Heart right ventricle (tissue), 16 donors: ENCODE measurements at regions of chr2 and their contacts with region 1.

Region 1: GRCh38 chr2:33051586-33052360 is 105.0 kb downstream of the LTBP1 start:
- DNase-seq: no peak
- ATAC-seq: peak in 4 of 8 donors; percentile 34 to 93 (median 55)
- H3K4me3 ChIP-seq: no peak overlapping the region
- H3K27ac ChIP-seq: peak overlapping the region in 1 of 10 donors; percentile 38
- H3K4me1 ChIP-seq: peaks cover 0 to 17% (median 3%) of the 10 kb centered on the region in 9 donors
- H3K27me3 ChIP-seq: no peaks in the 10 kb centered on the region
- CTCF ChIP-seq: no peak

Region 2: GRCh38 chr2:32783469-32783868 is 268.3 kb before region 1 on chr2:
- intact Hi-C with region 1: no loop called
- DNase-seq: peak in 1 of 2 donors; percentile 30
- ATAC-seq: peak; percentile 63 to 89 (median 86)
- H3K4me3 ChIP-seq: peak overlapping the region in 1 of 10 donors; percentile 6
- H3K27ac ChIP-seq: peak overlapping the region in 9 of 10 donors; percentile 40 to 73 (median 58)
- H3K4me1 ChIP-seq: peaks cover 0 to 33% (median 26%) of the 10 kb centered on the region in 9 donors
- H3K27me3 ChIP-seq: no peaks in the 10 kb centered on the region
- CTCF ChIP-seq: no peak

Region 3: GRCh38 chr2:32901313-32901712 is 150.5 kb before region 1 on chr2:
- intact Hi-C with region 1: no loop called
- DNase-seq: no peak
- ATAC-seq: no peak
- H3K4me3 ChIP-seq: no peak overlapping the region
- H3K27ac ChIP-seq: no peak overlapping the region
- H3K4me1 ChIP-seq: peaks cover 0 to 5% (median 0%) of the 10 kb centered on the region in 9 donors
- H3K27me3 ChIP-seq: no peaks in the 10 kb centered on the region
- CTCF ChIP-seq: no peak

Region 4: GRCh38 chr2:33126958-33127357 is 75.2 kb after region 1 on chr2:
- intact Hi-C with region 1: loop called in 1 of 10 experiments (anchors 10 kb)
- DNase-seq: no peak
- ATAC-seq: no peak
- H3K4me3 ChIP-seq: no peak overlapping the region
- H3K27ac ChIP-seq: peak overlapping the region in 3 of 10 donors; percentile 13 to 57 (median 37)
- H3K4me1 ChIP-seq: peaks cover 0 to 41% (median 8%) of the 10 kb centered on the region in 9 donors
- H3K27me3 ChIP-seq: no peaks in the 10 kb centered on the region
- CTCF ChIP-seq: no peak